Activated naive CD4-positive, alpha-beta T cell treated with anti-CD3 and anti-CD28 coated beads for 36 hours (primary cell): ENCODE measurements at regions of chr20 and their contacts with region 1.

Region 1: DNA sequence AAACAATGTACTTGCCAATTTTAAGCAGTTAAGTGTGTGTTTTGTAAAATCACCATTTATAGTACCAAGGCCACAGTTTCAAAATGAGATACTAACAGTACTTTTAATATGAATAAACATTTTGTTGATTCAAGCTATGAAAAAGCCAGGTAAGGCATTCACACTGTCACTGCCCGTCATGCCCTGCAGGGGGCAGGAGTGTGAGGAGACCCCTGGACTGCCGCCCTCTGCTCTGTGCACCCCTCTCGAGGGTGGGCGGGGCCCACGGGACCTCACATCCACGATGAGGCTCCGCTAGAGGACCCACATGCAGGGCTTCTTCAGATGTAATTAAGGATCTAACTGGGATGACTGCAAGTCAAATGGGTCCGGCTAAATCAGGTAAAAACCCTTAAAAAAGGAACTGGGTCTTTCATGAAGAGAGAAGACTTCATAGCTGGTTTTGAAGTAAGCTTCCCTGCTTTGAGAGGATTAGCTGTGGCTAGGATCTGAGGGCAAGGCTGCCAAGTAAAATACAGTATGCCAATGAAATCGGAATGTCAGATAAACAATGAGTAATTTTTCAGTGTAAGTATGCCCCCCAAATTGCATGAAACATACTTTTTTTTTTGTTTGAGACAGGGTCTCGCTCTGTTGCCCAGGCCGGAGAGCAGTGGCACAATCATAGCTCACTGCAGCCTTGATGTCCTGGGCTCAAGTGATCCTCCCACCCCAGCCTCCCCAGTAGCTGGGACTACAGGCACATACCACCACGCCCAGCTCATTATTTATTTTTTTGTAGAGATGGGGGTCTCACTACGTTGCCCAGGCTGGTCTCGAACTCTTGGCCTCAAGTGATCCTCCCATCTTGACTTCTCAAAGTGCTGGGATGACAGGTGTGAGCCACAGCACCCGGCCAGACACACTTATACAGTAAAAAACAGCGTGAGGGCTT is 18.7 kb downstream of the DIDO1 start:
- DNase-seq: peak; percentile 38
- H3K4me3 Mint-ChIP-seq: no peak overlapping the region
- H3K27ac Mint-ChIP-seq: peak overlapping the region; percentile 30
- H3K4me1 Mint-ChIP-seq: peaks cover 2% of the 10 kb centered on the region
- H3K27me3 Mint-ChIP-seq: no peaks in the 10 kb centered on the region

Region 2: GRCh38 chr20:62357187-62357667 is 550.4 kb before region 1 on chr20:
- CTCF ChIA-PET with region 1: no interaction called
- intact Hi-C with region 1: no loop called
- DNase-seq: no peak
- H3K4me3 Mint-ChIP-seq: no peak overlapping the region
- H3K27ac Mint-ChIP-seq: no peak overlapping the region
- H3K4me1 Mint-ChIP-seq: no peaks in the 10 kb centered on the region
- H3K27me3 Mint-ChIP-seq: peaks cover 3% of the 10 kb centered on the region

Region 3: GRCh38 chr20:62557445-62557844 is 350.2 kb before region 1 on chr20:
- CTCF ChIA-PET with region 1: no interaction called
- intact Hi-C with region 1: no loop called
- DNase-seq: no peak
- H3K4me3 Mint-ChIP-seq: no peak overlapping the region
- H3K27ac Mint-ChIP-seq: no peak overlapping the region
- H3K4me1 Mint-ChIP-seq: no peaks in the 10 kb centered on the region
- H3K27me3 Mint-ChIP-seq: peaks cover 21% of the 10 kb centered on the region

Region 4: GRCh38 chr20:62921119-62921687 is 13.6 kb after region 1 on chr20:
- CTCF ChIA-PET with region 1: interaction called, 34 read pairs
- intact Hi-C with region 1: no loop called
- DNase-seq: peak; percentile 84
- H3K4me3 Mint-ChIP-seq: peak overlapping the region; percentile 60
- H3K27ac Mint-ChIP-seq: peak overlapping the region; percentile 81
- H3K4me1 Mint-ChIP-seq: peaks cover 78% of the 10 kb centered on the region
- H3K27me3 Mint-ChIP-seq: no peaks in the 10 kb centered on the region